Dendritic cell treated with granulocyte-macrophage colony-stimulating factor and Interleukin-4, amounts not matched to agents 40 ng/mL and 50 ng/mL, for 4 days (primary cell): ENCODE measurements at regions of chr5 and their contacts with region 1.

Region 1: GRCh38 chr5:180291943-180292831 is at the start of gene MAPK9:
- H3K4me3 Mint-ChIP-seq: peak within 1 kb of the TSS; percentile 89
- H3K27ac Mint-ChIP-seq: peak within 1 kb of the TSS; percentile 80
- H3K4me1 Mint-ChIP-seq: peaks cover 62% of the 10 kb centered on the region
- H3K27me3 Mint-ChIP-seq: peaks cover 6% of the 10 kb centered on the region

Region 2: GRCh38 chr5:180191716-180192115 is 100.5 kb before region 1 on chr5:
- intact Hi-C with region 1: no loop called
- H3K4me3 Mint-ChIP-seq: no peak overlapping the region
- H3K27ac Mint-ChIP-seq: no peak overlapping the region
- H3K4me1 Mint-ChIP-seq: no peaks in the 10 kb centered on the region
- H3K27me3 Mint-ChIP-seq: peaks cover 5% of the 10 kb centered on the region

Region 3: GRCh38 chr5:180315762-180316212 is 23.6 kb after region 1 on chr5:
- intact Hi-C with region 1: loop called (anchors 1 kb)
- H3K4me3 Mint-ChIP-seq: no peak overlapping the region
- H3K27ac Mint-ChIP-seq: no peak overlapping the region
- H3K4me1 Mint-ChIP-seq: no peaks in the 10 kb centered on the region
- H3K27me3 Mint-ChIP-seq: peaks cover 12% of the 10 kb centered on the region

Region 4: GRCh38 chr5:180353048-180353979 is 61.1 kb after region 1 on chr5 and contains the start of gene GFPT2:
- intact Hi-C with region 1: no loop called
- H3K4me3 Mint-ChIP-seq: peak within 1 kb of the TSS; percentile 62
- H3K27ac Mint-ChIP-seq: no peak within 1 kb of the TSS
- H3K4me1 Mint-ChIP-seq: no peaks in the 10 kb centered on the region
- H3K27me3 Mint-ChIP-seq: peaks cover 75% of the 10 kb centered on the region

Region 5: DNA sequence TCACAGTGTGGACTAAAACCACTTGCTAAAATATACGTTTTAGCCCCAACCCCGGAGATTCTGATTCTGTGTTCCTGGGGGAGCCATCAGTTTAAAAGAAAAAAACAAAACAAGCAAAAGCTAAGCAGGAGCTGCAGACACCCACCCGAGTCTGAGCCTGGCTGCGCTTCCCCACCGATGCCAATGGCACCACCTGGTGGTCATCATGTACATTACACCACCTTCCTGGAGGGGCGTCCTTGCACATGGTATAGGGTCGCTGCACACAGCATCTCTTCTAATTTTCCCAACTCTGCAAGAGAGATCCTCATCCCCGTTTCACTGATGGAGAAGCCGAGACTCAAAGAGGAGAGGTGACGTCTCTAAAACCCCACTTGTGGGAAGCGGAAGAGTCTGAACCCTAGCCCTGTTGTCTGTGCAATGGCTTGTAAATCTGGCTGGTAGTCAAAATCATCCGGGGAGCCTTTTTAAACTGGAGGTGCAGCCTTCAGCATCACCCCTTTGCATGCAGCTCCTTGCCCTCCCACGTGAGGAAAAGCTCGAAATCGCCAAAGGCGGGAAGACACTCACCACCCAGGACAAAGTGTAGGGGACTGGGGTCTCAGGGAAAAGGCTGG is 178.9 kb after region 1 on chr5:
- intact Hi-C with region 1: loop called (anchors 2 kb)
- H3K4me3 Mint-ChIP-seq: no peak overlapping the region
- H3K27ac Mint-ChIP-seq: no peak overlapping the region
- H3K4me1 Mint-ChIP-seq: no peaks in the 10 kb centered on the region
- H3K27me3 Mint-ChIP-seq: peaks cover 14% of the 10 kb centered on the region

Region 6: DNA sequence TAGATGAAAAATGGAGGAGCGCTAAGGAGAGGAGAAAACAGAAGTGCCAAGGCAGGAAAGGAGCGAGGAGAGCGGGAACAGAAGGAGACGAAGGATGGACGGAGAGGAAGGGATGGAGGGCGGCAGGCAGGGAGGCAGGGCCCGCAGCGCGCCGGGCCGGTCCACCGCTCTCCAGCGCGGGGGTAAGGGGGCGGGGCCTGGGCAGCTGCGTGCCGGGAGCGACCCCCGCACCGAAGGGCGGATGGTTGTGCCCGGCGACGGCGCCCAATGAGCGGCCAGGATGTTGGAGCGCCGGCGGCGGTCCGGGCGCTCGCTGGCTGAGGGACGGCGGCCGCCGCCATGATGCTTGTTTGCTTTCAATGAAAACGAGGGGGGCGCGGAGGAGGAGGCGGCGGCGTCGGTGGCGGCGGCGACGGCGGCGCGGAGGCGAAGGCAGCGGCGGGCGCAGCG is 201.9 kb after region 1 on chr5 and contains the start of gene CNOT6:
- intact Hi-C with region 1: loop called (anchors 5 kb)
- H3K4me3 Mint-ChIP-seq: peak within 1 kb of the TSS; percentile 88
- H3K27ac Mint-ChIP-seq: peak within 1 kb of the TSS; percentile 66
- H3K4me1 Mint-ChIP-seq: peaks cover 43% of the 10 kb centered on the region
- H3K27me3 Mint-ChIP-seq: no peaks in the 10 kb centered on the region